ENCODE measurements at regions of chr2 and their contacts with region 1.

Region 1: DNA sequence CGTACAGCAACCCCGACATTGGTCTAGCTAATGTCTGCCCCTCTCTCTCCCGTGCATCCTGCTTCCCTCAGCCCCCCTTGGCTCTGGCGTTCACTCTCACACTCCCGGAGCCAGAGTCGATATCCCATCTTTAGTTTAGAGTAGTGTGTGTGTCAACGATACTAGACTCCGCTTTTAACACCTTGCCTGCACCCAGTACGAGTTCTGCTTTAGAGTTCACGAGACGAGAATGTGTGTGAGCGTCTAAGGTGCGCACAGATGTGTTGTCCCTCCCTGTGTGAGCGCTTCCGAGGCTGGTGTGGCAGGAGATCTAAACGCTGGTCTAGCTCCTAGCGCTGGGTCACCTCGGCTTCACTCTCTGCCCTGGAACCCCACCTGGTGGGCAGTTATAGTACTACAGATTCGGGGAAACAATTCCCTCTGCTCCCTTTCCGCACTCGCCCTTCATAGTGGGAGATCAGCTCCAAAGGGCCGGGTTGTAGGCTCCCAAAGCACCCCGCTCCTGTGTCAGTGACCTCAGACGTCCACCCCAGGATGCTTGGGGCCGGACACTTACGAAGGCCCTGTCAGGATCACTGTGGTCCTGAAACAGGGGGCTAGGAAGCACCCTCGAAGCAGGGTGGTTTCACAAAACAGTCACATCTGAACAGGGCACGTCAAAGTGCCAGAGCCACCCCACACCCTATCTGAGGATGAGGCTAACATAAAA is 2.6 kb upstream of the CYP26B1 start:
- DNase-seq: peak; percentile 81 to 87
- H3K4me3 ChIP-seq: peak overlapping the region; percentile 52 to 58
- H3K27ac ChIP-seq: no peak overlapping the region
- H3K4me1 ChIP-seq: peaks cover 0 to 47% (median 44%) of the 10 kb centered on the region in 4 donors
- H3K27me3 ChIP-seq: peaks cover 0 to 74% of the 10 kb centered on the region in 2 donors
- CTCF ChIP-seq: peak; percentile 89 to 91

Region 2: DNA sequence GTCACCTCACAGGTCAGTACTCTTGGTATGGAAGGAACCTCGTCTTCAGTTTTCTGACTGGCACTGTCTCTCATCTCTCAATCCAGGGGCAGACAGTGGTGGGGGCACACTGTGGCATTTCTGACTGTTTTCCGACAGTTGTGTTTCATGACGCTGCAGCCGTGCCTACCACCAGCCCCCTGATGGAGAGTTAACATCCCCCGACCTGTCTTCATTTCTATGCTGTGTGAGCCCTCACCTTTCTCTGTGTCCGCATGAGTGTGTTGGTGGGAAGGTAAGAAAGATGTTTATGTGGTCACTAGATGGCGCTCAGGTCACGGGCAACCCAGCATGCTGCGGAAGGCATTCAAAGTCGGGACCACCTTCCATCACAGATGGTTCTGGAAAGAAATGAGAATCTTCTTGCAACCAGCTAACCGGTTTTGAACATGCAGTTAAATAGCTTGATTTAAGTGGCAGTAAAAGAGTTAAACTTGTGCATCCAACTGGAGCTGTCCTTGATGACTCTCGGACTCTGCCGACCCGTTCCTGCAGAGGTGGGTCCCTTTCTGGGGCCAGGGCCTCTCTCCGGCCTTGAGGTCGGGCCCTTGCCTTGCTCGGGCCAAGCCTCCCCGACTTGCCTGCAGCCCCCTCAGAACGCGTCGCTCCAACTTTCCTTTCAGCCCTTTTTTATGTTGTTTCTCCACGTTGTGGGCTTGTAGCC is 604.6 kb before region 1 on chr2:
- intact Hi-C with region 1: loop called (anchors 5 kb)
- DNase-seq: peak in 1 of 2 donors; percentile 70
- H3K4me3 ChIP-seq: no peak overlapping the region
- H3K27ac ChIP-seq: no peak overlapping the region
- H3K4me1 ChIP-seq: peaks cover 0 to 4% (median 0%) of the 10 kb centered on the region in 4 donors
- H3K27me3 ChIP-seq: peaks cover 0 to 5% of the 10 kb centered on the region in 2 donors
- CTCF ChIP-seq: peak; percentile 67

Region 3: DNA sequence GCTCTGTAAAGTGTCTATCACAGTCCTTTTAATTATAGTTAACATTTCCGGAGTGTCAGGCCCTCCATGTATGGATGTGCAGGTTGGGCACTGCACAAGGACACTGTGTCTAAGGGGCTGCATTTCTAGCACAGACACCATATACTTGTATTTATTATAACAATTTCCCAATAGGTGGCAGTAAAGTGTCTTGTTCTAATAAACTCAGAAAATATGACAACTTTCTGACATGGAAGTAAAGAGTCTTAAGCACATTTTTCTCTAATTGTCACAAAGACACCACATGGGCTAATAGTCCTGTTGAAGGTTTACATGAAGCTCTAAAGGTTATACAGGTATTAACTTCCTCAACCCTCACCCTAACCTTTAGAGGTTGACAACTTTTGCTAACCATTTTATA is 540.4 kb before region 1 on chr2:
- intact Hi-C with region 1: loop called (anchors 2 kb)
- DNase-seq: no peak
- H3K4me3 ChIP-seq: no peak overlapping the region
- H3K27ac ChIP-seq: no peak overlapping the region
- H3K4me1 ChIP-seq: peaks cover 0 to 13% (median 10%) of the 10 kb centered on the region in 4 donors
- H3K27me3 ChIP-seq: no peaks in the 10 kb centered on the region
- CTCF ChIP-seq: peak; percentile 31 to 38

Region 4: DNA sequence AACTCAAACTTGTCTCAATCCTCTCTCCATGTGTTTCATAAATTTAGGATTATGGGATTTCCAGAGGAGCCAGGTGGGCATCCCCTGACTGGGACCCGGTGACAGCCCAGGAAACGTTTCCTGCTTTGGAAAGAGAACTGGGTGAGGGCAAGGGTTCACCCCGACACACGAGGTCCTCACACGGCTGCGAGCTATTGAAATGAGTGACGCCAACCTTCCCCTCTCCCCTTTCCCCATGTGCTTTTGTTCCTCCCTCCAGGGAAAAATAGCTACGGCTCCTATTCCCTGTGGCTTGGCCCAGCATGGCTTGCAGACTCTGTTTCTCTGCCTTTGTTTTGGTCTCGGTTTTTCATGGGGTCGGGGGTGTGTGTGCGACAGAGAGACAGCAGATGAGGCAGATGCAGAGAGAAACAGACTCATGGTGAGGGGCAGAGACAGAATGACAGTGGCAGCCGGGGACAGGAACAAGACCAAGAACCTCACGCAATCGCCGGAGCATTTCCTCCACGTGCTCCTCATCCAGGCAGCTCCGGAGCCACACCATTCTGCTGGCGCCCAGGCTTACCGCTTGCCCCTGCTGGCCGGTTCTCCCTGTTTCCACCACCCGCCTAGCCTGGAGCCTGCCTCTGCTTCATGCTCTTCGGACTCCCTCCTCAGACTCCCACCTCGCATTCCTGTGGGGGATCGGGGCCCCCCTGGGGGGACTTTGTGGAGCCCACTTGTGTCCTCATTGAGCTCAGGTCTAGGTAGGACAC is 458.4 kb before region 1 on chr2:
- intact Hi-C with region 1: loop called (anchors 10 kb)
- DNase-seq: peak in 1 of 2 donors; percentile 69
- H3K4me3 ChIP-seq: no peak overlapping the region
- H3K27ac ChIP-seq: no peak overlapping the region
- H3K4me1 ChIP-seq: peaks cover 0 to 17% (median 3%) of the 10 kb centered on the region in 4 donors
- H3K27me3 ChIP-seq: no peaks in the 10 kb centered on the region
- CTCF ChIP-seq: no peak

Region 5: GRCh38 chr2:71801969-71802368 is 348.3 kb before region 1 on chr2:
- intact Hi-C with region 1: loop called (anchors 5 kb)
- DNase-seq: peak; percentile 57 to 84
- H3K4me3 ChIP-seq: no peak overlapping the region
- H3K27ac ChIP-seq: no peak overlapping the region
- H3K4me1 ChIP-seq: peaks cover 0 to 16% (median 9%) of the 10 kb centered on the region in 4 donors
- H3K27me3 ChIP-seq: no peaks in the 10 kb centered on the region
- CTCF ChIP-seq: peak; percentile 73 to 78

Region 6: GRCh38 chr2:71923887-71924533 is 226.3 kb before region 1 on chr2:
- intact Hi-C with region 1: loop called (anchors 2 kb)
- DNase-seq: peak in 1 of 2 donors; percentile 71
- H3K4me3 ChIP-seq: no peak overlapping the region
- H3K27ac ChIP-seq: no peak overlapping the region
- H3K4me1 ChIP-seq: no peaks in the 10 kb centered on the region
- H3K27me3 ChIP-seq: no peaks in the 10 kb centered on the region
- CTCF ChIP-seq: peak; percentile 81 to 83

Region 7: GRCh38 chr2:72579591-72580180 is 429.4 kb after region 1 on chr2:
- intact Hi-C with region 1: loop called (anchors 10 kb)
- DNase-seq: no peak
- H3K4me3 ChIP-seq: no peak overlapping the region
- H3K27ac ChIP-seq: no peak overlapping the region
- H3K4me1 ChIP-seq: peaks cover 0 to 13% (median 3%) of the 10 kb centered on the region in 4 donors
- H3K27me3 ChIP-seq: no peaks in the 10 kb centered on the region
- CTCF ChIP-seq: peak; percentile 44 to 64